ENCODE measurements at regions of chr2 and their contacts with region 1.

Region 1: DNA sequence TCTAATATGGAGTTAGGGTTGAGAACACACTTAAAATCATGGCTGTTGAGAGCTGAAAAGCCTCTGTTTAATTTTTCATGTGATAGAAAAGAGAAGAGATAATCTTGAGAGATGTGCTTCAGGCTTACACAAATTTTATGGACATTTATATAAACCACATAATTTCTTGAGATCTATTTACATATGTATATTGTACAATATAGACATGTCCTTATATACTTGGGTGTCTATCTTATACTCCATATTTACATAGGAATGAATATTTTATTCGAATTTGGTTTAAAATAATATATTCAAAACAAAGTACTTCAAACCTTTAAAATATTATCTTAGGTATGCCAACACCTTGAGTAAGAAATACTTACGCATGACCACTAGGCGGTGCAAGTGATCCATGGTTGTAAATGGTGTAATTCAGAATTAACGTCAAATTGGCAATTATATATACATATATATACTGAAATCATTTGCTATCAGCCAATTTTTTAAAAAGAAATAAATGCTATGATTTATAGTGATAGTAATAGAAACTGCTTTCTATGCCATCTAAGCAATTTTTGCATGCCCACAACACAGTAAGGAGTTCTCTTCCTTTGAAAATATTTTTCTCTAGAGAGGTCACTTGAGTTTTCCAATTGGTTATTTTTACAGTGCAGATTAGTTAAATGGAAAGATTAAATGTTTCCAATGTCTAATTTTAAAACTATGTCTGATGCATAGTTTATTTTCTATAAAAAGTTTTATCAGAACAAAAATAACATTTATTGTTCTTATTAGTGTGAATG is 37.6 kb upstream of the SPAG16 start:
- DNase-seq: peak; percentile 13
- H3K27ac ChIP-seq: no peak overlapping the region
- CTCF ChIP-seq: peak; percentile 86

Region 2: GRCh38 chr2:212863185-212863588 is 383.5 kb before region 1 on chr2:
- CTCF ChIA-PET with region 1: interaction called, 10 read pairs
- POLR2A ChIA-PET with region 1: no interaction called
- DNase-seq: no peak
- H3K27ac ChIP-seq: no peak overlapping the region
- CTCF ChIP-seq: peak; percentile 34; the same call in 1 of the 2 replicates

Region 3: GRCh38 chr2:213500881-213501280 is 254.2 kb after region 1 on chr2:
- CTCF ChIA-PET with region 1: no interaction called
- POLR2A ChIA-PET with region 1: no interaction called
- DNase-seq: peak; percentile 46
- H3K27ac ChIP-seq: no peak overlapping the region
- CTCF ChIP-seq: no peak

Measured in RWPE1 (cell line).